ENCODE measurements at regions of chr5 and their contacts with region 1.

Region 1: GRCh38 chr5:140351609-140352334 is 5.4 kb upstream of the HBEGF start:
- DNase-seq: peak; percentile 66
- H3K4me3 ChIP-seq: peak overlapping the region in 1 of 2 experiments; percentile 11; a peak in 1 of 4 replicates
- H3K27ac ChIP-seq: no peak overlapping the region
- H3K4me1 ChIP-seq: peaks cover 0 to 6% of the 10 kb centered on the region in 2 experiments; a peak in 2 of 4 replicates
- H3K27me3 ChIP-seq: no peaks in the 10 kb centered on the region
- CTCF ChIP-seq: peak; percentile 88
- EP300 ChIP-seq: no peak
- RAD21 ChIP-seq: peak; percentile 74

Region 2: DNA sequence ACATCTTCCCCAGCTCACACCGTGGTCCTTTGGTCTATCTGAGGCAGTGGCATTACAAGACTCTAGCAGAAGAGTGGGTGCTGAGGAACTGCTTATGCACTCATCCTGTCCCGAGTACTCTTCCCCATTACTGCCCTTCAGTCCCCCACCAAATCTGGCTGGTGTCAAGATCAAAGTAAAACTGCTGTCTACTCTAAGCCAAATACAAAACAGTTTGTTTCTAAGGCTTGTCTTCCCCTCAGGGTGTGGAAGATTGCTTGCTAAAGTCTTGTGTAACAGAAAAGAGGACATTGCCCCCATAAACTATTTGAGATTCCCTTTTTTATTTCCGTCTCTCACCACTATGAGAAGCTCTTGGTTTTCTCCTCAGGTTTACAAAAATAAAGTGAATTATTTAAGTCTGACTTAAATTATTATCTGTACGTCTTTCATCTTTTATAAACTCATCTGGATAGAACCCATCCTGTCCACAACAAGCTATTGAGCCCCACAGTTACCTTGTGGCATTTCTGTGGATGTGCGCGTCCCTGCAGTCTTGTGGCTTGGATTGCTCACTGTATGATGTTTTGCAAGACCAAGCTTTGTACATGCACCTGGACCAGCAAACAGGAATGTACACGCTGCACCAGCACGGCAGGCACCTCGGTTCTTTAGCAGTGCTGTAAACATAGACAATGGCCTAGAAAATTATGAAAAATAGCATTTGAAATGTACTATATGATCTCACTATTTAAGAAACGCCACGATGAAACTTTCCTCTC is 115.8 kb before region 1 on chr5:
- CTCF ChIA-PET with region 1: interaction called, 418 read pairs
- POLR2A ChIA-PET with region 1: interaction called, 13 read pairs
- DNase-seq: no peak
- H3K4me3 ChIP-seq: no peak overlapping the region
- H3K27ac ChIP-seq: no peak overlapping the region
- H3K4me1 ChIP-seq: peaks cover 5 to 8% of the 10 kb centered on the region in 2 experiments; a peak in 3 of 4 replicates
- H3K27me3 ChIP-seq: no peaks in the 10 kb centered on the region
- CTCF ChIP-seq: no peak
- EP300 ChIP-seq: no peak
- RAD21 ChIP-seq: no peak

Region 3: DNA sequence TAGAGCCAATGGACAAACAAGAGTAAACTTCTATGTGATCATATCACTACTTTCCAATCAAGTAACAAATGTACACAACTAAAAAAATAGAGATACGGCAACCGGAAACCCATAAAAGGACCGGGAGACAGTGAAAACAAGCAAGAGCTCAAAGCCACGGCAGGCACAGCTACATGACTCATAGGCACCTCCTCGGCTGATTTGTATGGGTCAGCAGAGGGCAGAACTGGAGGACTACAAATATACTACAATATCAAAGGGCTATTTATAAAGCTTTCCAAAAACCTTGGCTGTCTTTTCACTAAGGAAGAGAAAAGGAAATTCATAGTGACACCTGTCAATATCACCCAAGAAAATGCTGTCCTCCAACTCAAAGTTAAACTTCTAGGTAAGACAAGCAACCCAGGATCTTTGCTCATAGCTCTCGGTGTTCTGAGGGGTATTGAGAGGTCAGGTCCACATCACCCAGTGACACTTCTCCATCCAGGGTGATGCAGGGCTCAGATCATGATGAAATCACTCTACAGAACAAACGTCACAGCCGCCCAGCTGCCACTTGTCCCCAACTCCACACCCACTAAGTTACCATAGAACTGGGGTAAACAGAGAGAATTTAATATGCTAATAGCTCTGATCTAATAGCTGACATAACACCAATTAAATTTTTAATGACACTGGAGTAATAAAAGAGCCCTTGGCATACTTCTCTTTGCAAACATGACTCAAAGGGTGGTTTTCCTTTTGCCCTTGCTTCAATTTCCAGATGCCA is 90.2 kb before region 1 on chr5:
- CTCF ChIA-PET with region 1: interaction called, 14 read pairs
- POLR2A ChIA-PET with region 1: no interaction called
- DNase-seq: no peak
- H3K4me3 ChIP-seq: no peak overlapping the region
- H3K27ac ChIP-seq: peak overlapping the region in 1 of 2 experiments; percentile 79; a peak in 2 of 4 replicates
- H3K4me1 ChIP-seq: peaks cover 7 to 24% of the 10 kb centered on the region in 2 experiments; a peak in 3 of 4 replicates
- H3K27me3 ChIP-seq: no peaks in the 10 kb centered on the region
- CTCF ChIP-seq: peak; percentile 38
- EP300 ChIP-seq: no peak
- RAD21 ChIP-seq: no peak

Region 4: DNA sequence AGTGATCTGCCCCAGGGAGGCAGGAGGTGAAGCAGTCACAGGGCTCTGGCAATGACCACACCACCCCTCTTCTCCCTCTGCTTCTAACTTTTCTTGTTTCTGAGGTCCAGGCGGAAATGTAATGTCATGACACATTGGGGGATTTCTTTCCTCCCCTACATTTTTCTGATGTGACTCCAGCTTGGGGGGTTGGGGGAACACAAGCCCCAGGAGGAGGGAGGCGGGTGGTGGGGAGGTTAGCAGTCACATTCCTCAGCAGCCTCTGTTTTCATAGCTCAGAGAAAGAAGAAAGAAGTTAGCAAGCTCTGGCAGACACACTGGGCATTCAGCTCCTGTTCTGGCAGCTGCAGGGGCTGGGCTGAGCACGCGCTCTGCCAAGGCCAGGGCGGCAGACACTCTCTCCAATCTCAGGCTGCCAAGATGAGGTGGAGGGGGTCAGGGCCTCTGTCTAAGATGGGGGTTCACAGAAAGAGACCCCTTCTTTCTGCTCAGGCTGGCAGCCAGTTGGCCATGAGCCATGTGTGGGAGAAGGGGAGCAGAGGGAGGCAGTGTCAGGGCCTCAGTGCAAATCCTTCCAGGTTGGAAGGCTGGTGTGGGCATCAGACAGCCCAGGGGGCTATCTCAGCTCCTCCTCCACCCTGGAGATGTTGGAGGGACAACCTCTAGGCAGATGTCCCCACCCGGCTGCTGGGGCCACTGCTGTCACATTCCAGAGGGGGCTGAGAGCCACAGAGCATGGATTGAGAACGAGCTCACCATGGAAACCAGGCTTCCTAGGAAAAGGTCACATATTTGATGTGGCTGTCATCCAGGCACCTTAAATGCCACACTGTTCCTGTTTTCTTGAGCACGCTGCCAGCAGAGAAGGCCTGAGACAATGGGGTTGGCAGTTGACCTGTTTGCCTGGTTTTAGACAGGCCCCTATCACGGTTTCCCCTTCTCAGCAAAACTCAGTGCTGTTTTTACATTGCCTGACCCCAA is 28.7 kb before region 1 on chr5:
- CTCF ChIA-PET with region 1: interaction called, 13 read pairs
- POLR2A ChIA-PET with region 1: no interaction called
- DNase-seq: no peak
- H3K4me3 ChIP-seq: no peak overlapping the region
- H3K27ac ChIP-seq: peak overlapping the region; percentile 32 to 94; a peak in 3 of 4 replicates
- H3K4me1 ChIP-seq: peaks cover 7 to 33% of the 10 kb centered on the region in 2 experiments; a peak in 3 of 4 replicates
- H3K27me3 ChIP-seq: no peaks in the 10 kb centered on the region
- CTCF ChIP-seq: no peak
- EP300 ChIP-seq: peak in 1 of 2 experiments; percentile 94; a peak in 2 of 4 replicates
- RAD21 ChIP-seq: no peak

Region 5: GRCh38 chr5:140362860-140363630 is 11.3 kb after region 1 on chr5:
- CTCF ChIA-PET with region 1: interaction called, 21 read pairs
- POLR2A ChIA-PET with region 1: interaction called, 3 read pairs
- DNase-seq: peak; percentile 85
- H3K4me3 ChIP-seq: peak overlapping the region in 1 of 2 experiments; percentile 20; a peak in 2 of 4 replicates
- H3K27ac ChIP-seq: no peak overlapping the region
- H3K4me1 ChIP-seq: peaks cover 0 to 2% of the 10 kb centered on the region in 2 experiments; a peak in 1 of 4 replicates
- H3K27me3 ChIP-seq: no peaks in the 10 kb centered on the region
- CTCF ChIP-seq: peak; percentile 79
- EP300 ChIP-seq: no peak
- RAD21 ChIP-seq: peak; percentile 58

Region 6: DNA sequence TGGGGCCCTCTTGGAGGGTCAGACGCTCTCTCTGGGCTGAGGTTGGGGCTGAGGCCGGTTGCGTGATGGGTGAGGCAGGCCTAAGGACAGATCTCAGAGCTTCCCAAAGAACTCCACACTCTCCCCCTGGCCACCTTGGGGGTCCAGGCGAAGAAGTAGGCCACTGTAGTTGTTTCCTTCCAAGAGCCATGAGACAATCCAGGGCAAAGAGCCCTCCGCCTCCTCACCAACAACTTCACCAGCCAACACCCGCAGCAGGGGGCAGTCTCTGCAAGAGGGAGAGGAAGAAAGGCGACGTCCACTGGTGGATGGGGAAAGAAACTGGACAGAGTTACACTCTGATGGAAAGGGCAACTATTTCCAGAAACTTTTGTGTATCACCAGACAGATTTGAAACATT is 223.5 kb after region 1 on chr5:
- CTCF ChIA-PET with region 1: no interaction called
- POLR2A ChIA-PET with region 1: no interaction called
- DNase-seq: no peak
- H3K4me3 ChIP-seq: no peak overlapping the region
- H3K27ac ChIP-seq: no peak overlapping the region
- H3K4me1 ChIP-seq: no peaks in the 10 kb centered on the region
- H3K27me3 ChIP-seq: no peaks in the 10 kb centered on the region
- CTCF ChIP-seq: no peak
- EP300 ChIP-seq: no peak
- RAD21 ChIP-seq: peak; percentile 39; the same call in 1 of the 2 replicates

Region 7: GRCh38 chr5:140672455-140673186 is 320.8 kb after region 1 on chr5:
- CTCF ChIA-PET with region 1: no interaction called
- POLR2A ChIA-PET with region 1: no interaction called
- DNase-seq: peak; percentile 50
- H3K4me3 ChIP-seq: no peak overlapping the region
- H3K27ac ChIP-seq: no peak overlapping the region
- H3K4me1 ChIP-seq: no peaks in the 10 kb centered on the region
- H3K27me3 ChIP-seq: no peaks in the 10 kb centered on the region
- CTCF ChIP-seq: no peak
- EP300 ChIP-seq: no peak
- RAD21 ChIP-seq: no peak